ENCODE measurements at regions of chr1 and their contacts with region 1.

Region 1: GRCh38 chr1:194295685-194296084 is 1109.3 kb upstream of the B3GALT2 start:
- DNase-seq: no peak
- ATAC-seq: peak; percentile 51 to 76
- H3K4me3 ChIP-seq: no peak overlapping the region
- H3K27ac ChIP-seq: no peak overlapping the region
- H3K4me1 ChIP-seq: no peaks in the 10 kb centered on the region
- H3K27me3 ChIP-seq: no peaks in the 10 kb centered on the region

Region 2: DNA sequence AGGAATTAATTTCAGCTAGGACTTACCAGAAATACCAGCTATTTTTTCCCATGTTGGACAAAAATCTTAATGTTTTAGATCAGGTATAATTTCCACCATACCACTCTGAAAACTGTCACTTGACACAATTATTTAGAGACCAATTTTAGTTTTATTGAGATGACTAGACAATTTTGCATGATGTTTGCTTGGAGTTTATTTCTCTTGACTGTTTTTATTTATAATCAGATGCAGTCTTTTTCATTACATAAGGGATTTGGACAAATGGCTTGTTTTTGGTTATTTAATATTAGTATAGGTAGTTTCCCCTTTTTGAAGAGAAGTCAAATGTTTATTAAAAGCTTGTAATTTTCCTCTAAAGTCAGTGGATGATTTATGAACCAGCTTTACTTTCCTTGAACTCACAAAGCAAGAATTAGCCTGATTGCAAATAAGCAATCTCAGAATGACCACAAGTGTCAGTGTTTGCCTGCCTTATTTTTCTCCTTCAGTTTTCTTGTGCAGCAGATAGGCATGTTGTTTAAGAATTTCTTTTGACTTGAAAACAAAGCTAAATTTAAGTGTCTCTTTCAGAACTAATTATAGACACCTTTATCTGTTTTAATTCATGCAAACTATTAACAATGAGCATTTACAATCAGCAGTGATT is 1105.5 kb before region 1 on chr1:
- intact Hi-C with region 1: loop called in 2 of 4 experiments (anchors 10 kb)
- DNase-seq: no peak
- ATAC-seq: no peak
- H3K4me3 ChIP-seq: no peak overlapping the region
- H3K27ac ChIP-seq: no peak overlapping the region
- H3K4me1 ChIP-seq: no peaks in the 10 kb centered on the region
- H3K27me3 ChIP-seq: no peaks in the 10 kb centered on the region